ENCODE measurements at regions of chr19 and their contacts with region 1.

Region 1: DNA sequence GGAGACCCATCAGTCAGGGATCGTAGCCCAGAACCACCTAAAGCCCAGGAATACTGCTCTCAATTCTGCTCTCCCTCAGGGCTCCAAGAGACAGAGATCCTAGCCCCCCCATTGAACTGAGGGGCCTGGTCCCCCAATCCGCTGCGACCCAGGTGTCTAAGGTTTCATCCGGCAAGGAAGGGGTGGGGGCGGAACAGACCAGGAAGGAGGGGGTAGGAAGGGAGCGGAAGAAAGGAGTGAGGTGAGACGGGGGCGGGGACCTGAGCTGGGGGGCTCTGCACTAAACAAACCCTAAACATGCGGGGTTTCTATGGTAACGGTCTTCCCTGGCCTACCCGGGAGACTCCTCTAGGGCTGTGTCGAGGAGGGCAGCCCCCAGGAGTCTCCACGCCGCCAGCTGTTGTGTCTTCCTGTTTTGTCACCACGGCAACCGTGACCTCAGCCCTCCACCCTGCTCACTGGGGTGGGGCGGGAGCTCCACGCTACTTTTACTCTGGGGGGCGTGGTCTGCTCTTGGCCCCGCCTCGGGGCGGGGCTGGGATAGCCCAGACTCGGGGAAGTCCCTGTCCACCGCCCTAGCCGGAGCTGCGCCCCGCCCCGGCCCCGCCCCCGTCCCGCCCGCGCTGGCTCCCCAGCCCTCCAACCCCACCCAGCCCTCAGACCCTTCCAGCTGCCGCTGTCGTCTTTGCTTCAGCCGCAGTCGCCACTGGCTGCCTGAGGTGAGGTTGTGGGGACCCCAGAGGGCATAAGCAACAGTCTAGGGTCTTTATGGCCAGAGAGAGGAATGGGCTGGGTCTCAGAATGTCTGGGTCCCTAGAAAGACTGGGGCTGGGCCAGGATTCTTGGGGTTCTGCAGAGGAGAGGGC is at the start of gene MYADM:
- DNase-seq: peak; percentile 99
- H3K4me3 ChIP-seq: peak within 1 kb of the TSS; percentile 52 to 88 (median 82)
- H3K27ac ChIP-seq: peak within 1 kb of the TSS; percentile 100
- H3K4me1 ChIP-seq: peaks cover 15% of the 10 kb centered on the region
- H3K27me3 ChIP-seq: no peaks in the 10 kb centered on the region
- CTCF ChIP-seq: no peak
- POLR2A ChIP-seq: peak; percentile 54
- total RNA-seq, gene MYADM: 128 and 133 TPM in 2 replicates

Region 2: DNA sequence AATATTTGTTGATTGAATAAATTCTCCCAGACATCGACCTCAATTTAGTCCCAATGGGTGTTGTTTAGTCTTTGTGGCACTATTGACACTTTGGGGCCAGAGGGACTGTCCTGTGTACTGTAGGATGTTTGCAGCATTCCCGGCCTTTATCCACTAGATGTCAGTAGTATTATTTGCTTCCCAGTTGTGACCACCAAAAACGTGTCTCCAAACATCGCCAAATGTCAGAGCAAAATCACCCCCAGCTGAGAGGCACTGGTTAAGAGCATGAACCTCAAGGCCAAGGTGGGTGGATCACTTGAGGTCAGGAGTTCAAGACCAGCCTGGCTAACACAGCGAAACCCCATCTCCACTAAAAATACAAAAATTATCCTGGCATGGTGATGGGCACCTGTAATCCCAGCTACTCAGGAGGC is 58.7 kb before region 1 on chr19:
- CTCF ChIA-PET with region 1: interaction called, 3 read pairs
- POLR2A ChIA-PET with region 1: no interaction called
- dilution Hi-C with region 1: no loop called
- intact Hi-C with region 1: loop called (anchors 2 kb)
- DNase-seq: peak; percentile 47
- H3K4me3 ChIP-seq: no peak overlapping the region
- H3K27ac ChIP-seq: no peak overlapping the region
- H3K4me1 ChIP-seq: peaks cover 10% of the 10 kb centered on the region
- H3K27me3 ChIP-seq: no peaks in the 10 kb centered on the region
- CTCF ChIP-seq: peak; percentile 51 to 59
- POLR2A ChIP-seq: no peak

Region 3: DNA sequence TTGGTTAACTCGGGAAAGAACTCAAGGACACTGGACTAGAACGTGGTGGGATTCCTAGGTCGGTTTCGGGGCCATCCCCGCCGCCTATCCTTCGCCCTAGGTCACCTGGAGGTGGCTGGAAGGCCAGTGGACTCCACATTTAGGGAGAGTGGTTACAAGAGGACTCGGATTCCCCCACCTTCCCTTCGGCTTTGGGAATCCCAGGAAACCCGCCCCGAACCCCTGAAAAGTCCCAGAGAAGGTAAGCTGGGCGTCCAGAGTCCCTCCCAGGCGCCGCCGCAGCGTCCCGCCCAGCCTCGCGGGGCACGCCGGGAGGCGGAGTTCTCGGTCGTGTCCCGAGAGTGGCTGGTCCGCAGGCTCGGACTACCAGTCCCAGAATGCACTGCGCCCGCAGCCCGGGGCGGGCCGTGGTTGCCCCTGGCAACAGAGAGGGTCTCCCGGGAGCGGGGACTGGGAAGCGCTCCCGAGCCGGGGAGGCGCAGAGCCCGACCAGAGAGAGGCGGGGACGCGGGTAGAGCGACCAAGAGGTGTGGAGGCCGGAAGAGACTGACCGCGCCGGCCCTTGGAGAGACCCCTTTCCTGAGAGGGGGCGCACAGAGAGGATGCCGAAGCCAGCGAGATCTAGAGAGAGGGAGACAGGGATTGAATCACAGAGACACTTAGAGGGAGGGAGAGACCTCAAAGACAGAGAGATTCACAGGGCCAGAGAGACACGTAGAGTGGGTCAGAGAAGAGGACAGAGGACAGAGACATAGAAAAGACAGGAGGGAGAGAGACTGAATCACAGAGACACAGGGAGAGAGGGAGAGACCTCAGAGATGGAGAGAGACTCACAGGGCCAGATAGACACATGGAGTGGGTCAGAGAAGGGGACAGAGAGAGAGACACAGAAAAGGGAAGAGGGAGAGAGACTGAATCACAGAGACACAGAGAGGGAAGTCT is 12.0 kb after region 1 on chr19:
- CTCF ChIA-PET with region 1: interaction called, 9 read pairs
- POLR2A ChIA-PET with region 1: interaction called, 5 read pairs
- dilution Hi-C with region 1: no loop called
- intact Hi-C with region 1: loop called (anchors 1 kb)
- DNase-seq: peak; percentile 91
- H3K4me3 ChIP-seq: peak overlapping the region; percentile 36 to 75 (median 56)
- H3K27ac ChIP-seq: no peak overlapping the region
- H3K4me1 ChIP-seq: peaks cover 17% of the 10 kb centered on the region
- H3K27me3 ChIP-seq: peaks cover 33 to 37% of the 10 kb centered on the region in 2 experiments
- CTCF ChIP-seq: no peak
- POLR2A ChIP-seq: peak; percentile 44

Region 4: GRCh38 chr19:54017261-54017660 is 149.8 kb after region 1 on chr19:
- CTCF ChIA-PET with region 1: no interaction called
- POLR2A ChIA-PET with region 1: no interaction called
- dilution Hi-C with region 1: no loop called
- intact Hi-C with region 1: loop called (anchors 1 kb)
- DNase-seq: no peak
- H3K4me3 ChIP-seq: no peak overlapping the region
- H3K27ac ChIP-seq: no peak overlapping the region
- H3K4me1 ChIP-seq: peaks cover 9% of the 10 kb centered on the region
- H3K27me3 ChIP-seq: no peaks in the 10 kb centered on the region
- CTCF ChIP-seq: no peak
- POLR2A ChIP-seq: no peak

Region 5: DNA sequence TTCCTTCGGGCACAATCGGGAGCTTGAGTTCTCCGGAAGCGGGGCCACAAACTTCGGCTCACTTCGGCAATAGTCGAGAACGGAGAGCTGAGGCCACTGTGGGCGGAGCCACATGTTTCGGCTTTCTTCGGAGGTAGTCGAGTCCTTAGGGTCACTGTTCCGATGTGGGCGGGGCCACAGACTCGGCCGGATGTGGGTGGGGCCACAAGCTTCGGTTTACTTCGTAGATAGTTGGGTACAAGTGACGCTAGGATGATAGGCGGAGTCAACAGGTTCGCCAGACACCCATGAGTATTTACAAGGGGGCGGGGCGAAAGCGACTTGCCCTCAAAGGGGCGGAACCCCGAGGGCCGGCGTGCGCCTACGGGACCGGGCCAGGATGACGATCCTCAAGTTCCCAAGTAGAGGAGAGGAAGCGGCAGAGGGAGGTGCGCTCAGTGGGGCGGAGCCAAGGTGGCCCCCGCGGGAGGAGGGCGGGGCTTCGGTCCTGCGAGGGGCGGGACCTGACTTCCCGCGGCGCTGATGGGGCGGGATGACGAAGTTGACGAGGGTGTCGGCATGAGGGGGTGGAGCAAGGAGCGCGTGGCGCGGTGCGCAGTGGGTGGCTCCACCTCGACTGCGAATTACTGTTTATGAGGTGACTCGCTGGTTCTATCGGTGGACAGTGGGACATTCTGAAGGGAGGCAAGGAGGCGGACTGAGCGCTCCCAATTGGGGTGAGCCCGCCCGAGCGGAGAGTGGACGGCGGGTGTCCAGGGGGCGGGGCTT is 322.5 kb after region 1 on chr19:
- CTCF ChIA-PET with region 1: no interaction called
- POLR2A ChIA-PET with region 1: no interaction called
- dilution Hi-C with region 1: no loop called
- intact Hi-C with region 1: loop called (anchors 1 kb)
- DNase-seq: peak; percentile 100
- H3K4me3 ChIP-seq: peak overlapping the region in 2 of 3 experiments; percentile 72 to 87
- H3K27ac ChIP-seq: peak overlapping the region; percentile 86
- H3K4me1 ChIP-seq: peaks cover 16% of the 10 kb centered on the region
- H3K27me3 ChIP-seq: no peaks in the 10 kb centered on the region
- CTCF ChIP-seq: no peak
- POLR2A ChIP-seq: peak; percentile 47